Tibial artery (tissue), 4 donors: ENCODE measurements at regions of chr10 and their contacts with region 1.

Region 1: GRCh38 chr10:119416855-119417254 is 125.7 kb downstream of the RGS10 start:
- DNase-seq: peak in 1 of 2 donors; percentile 55
- H3K4me3 ChIP-seq: no peak overlapping the region
- H3K27ac ChIP-seq: no peak overlapping the region
- H3K4me1 ChIP-seq: peaks cover 0 to 39% (median 22%) of the 10 kb centered on the region in 4 donors
- H3K27me3 ChIP-seq: no peaks in the 10 kb centered on the region
- CTCF ChIP-seq: peak; percentile 54 to 60

Region 2: GRCh38 chr10:119281581-119282071 is 135.2 kb before region 1 on chr10:
- intact Hi-C with region 1: loop called (anchors 10 kb)
- DNase-seq: peak; percentile 72 to 90
- H3K4me3 ChIP-seq: no peak overlapping the region
- H3K27ac ChIP-seq: peak overlapping the region; percentile 53 to 64
- H3K4me1 ChIP-seq: peaks cover 0 to 84% (median 64%) of the 10 kb centered on the region in 4 donors
- H3K27me3 ChIP-seq: no peaks in the 10 kb centered on the region
- CTCF ChIP-seq: no peak

Region 3: DNA sequence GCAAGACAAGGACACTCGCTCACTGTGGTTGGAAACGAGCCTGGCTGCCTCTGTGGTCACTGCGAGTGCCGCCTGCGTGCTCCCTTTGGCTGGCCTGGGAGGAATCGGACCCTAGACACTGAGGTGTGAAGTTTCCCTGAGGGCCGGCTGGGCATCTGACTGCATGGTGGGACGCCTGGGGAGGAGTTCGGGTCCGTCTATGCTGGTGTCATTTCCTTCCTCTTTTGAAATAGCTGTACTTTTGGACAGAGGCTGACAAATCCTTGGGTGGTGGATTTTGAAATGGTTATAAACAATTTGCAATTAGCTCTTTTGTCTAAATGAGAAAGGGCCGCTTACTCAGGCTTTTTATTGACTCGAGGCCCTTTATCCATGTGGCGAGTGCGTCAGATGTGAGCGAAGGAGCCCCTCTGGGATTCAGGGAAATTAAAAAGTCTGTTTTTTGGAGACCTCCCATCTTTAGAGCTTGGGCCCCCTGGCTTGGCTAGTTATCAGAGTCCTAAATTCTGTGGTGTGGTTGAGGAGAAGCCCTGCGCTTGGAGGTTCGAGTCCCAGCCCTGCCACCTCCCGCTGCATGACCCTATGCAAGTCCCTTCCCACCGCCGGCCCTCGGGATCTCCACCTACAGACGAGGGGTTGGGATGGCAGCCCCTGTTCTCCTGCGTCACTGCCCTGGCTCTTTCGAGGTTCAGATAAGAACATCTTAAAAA is 21.4 kb before region 1 on chr10:
- intact Hi-C with region 1: no loop called
- DNase-seq: peak in 1 of 2 donors; percentile 59
- H3K4me3 ChIP-seq: no peak overlapping the region
- H3K27ac ChIP-seq: peak overlapping the region in 1 of 2 donors; percentile 11
- H3K4me1 ChIP-seq: peaks cover 0 to 16% (median 6%) of the 10 kb centered on the region in 4 donors
- H3K27me3 ChIP-seq: no peaks in the 10 kb centered on the region
- CTCF ChIP-seq: no peak

Region 4: GRCh38 chr10:119494236-119495060 is 77.6 kb after region 1 on chr10:
- intact Hi-C with region 1: no loop called
- DNase-seq: peak in 1 of 2 donors; percentile 41
- H3K4me3 ChIP-seq: no peak overlapping the region
- H3K27ac ChIP-seq: no peak overlapping the region
- H3K4me1 ChIP-seq: peaks cover 0 to 6% (median 4%) of the 10 kb centered on the region in 4 donors
- H3K27me3 ChIP-seq: no peaks in the 10 kb centered on the region
- CTCF ChIP-seq: no peak